Posterior cingulate gyrus (tissue), 11 donors: ENCODE measurements at regions of chr20 and their contacts with region 1.

Region 1: GRCh38 chr20:53939572-53940359 is 130.6 kb downstream of the BCAS1 start:
- DNase-seq: peak; percentile 55 to 96 (median 84)

Region 2: GRCh38 chr20:53578492-53579222 is 361.1 kb before region 1 on chr20:
- intact Hi-C with region 1: loop called (anchors 1 kb)
- DNase-seq: peak in 3 of 10 donors; percentile 23 to 75 (median 40)

Region 3: DNA sequence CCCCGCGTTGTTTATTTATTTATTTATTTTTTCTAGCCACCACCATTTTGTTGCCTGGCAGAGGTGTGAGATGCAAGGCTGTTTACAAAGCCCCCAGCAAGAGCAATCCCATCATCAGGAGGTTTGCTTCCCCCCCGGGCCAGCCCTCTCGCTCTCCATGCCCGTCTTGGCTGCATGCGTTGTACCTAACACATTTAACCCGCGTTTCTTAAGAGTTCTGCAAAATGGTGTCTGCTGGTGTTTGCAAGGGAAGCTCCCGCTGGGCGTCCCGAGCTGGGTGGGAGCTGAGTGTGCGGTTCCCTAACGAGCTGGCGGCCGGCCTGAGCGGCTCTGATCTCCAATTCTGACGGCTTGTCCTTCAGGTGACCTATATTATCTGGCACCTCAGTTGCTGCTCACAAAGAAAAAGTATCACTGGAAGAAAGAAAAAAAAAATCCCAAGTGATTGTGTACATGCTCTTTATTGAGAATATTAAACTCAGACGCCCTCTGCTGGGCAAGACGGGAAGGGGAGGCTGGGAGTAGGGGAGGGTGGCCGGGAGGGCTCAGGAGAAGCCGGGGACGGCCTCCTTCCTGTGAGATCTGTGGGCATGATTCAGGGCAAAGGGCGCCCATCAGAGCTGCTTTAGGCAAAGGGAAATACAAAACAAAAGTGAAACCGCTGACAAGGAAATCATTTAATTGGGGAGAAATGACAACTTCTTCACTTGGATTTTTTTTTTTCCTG is 24.2 kb before region 1 on chr20:
- intact Hi-C with region 1: loop called (anchors 2 kb)
- DNase-seq: peak; percentile 82 to 97 (median 94)

Region 4: GRCh38 chr20:54025251-54025771 is 85.5 kb after region 1 on chr20:
- intact Hi-C with region 1: loop called (anchors 10 kb)
- DNase-seq: no peak

Region 5: GRCh38 chr20:54062812-54063280 is 123.1 kb after region 1 on chr20:
- intact Hi-C with region 1: loop called (anchors 5 kb)
- DNase-seq: no peak